Right ventricle myocardium inferior (tissue), 1 donor: ENCODE measurements at regions of chr1 and their contacts with region 1.

Region 1: DNA sequence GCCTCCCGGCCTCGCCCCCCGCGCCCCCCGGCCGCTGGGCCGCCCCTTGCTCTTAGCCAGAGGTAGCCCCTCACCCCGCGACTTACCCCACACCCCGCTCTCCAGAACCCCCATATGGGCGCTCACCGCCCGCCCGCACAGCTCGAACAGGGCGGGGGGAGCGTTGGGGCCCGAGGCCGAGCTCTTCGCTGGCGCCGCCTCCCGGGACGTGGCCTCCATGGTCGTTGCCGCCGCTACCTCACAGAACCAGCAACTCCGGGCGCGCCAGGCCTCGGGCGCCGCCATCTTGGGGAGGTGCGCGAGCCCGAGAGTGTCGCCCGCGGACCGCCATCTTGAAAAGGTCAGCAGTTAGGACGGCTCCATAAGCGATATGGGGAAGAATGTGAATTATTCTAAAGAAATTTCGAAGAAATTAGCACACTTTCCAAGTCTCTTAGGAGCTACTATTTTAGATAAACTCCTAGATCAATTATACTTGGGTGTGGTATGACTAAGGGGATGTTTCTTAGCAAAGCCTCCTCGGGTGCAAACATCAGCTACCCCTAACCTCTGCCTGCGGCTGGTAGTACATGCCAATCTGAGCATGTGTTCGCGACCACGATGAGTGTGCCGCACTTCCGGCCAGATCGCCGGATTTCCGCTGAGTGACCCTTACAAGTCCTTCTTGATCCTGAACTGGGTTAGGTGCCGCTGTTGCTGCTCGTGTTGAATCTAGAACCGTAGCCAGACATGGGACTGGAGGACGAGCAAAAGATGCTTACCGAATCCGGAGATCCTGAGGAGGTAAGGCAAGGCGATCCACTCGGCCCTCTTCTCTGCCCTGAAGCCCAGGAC is at the starts of genes LRRC41 and UQCRH:
- DNase-seq: peak; percentile 98
- ATAC-seq: peak; percentile 94
- total RNA-seq, gene LRRC41: 35.8 TPM
- total RNA-seq, gene UQCRH: 1,208 TPM

Region 2: DNA sequence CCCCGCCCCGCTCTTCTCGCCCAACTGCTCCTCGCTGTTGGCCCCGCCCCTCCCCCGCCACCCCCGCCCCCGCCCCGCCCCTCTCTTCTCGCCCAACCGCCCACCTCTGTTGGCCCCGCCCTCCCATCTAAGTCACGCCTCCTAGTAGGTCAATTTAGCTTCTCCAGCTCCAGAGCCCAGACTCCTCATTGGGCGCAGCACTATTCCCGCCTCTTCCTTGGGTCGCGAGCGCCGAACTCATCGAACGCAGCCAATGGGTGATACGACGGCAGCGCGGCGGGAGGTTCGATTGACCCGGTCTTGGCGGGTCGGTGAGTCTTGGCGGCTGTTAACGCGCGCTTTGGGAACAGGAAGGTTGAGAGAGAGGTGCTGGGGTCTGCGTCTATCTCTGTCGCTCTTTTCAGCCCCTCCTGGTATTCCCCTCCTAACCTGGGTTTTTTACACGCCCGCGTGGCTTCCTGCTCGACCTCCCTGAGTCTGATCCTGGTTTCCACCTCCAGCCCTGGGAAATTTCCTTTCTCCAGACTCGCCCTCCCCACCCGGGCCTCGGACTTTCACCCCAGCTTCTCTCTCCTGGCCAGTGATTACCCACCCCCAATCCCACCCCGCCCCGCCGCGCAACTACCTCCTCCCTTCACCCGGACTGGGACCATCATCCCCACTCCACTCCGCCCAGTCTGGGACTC is 55.7 kb before region 1 on chr1 and contains the start of gene RAD54L:
- intact Hi-C with region 1: loop called (anchors 2 kb)
- DNase-seq: peak; percentile 98
- ATAC-seq: peak; percentile 97
- total RNA-seq, gene RAD54L: 0.73 TPM

Region 3: GRCh38 chr1:46340404-46341221 is 37.4 kb after region 1 on chr1 and contains the start of gene NSUN4:
- intact Hi-C with region 1: loop called (anchors 1 kb)
- DNase-seq: peak; percentile 96
- ATAC-seq: peak; percentile 98
- total RNA-seq, gene NSUN4: 14.0 TPM